Posterior vena cava (tissue), 2 donors: ENCODE measurements at regions of chr13 and their contacts with region 1.

Region 1: GRCh38 chr13:24678151-24678550 is 2.1 kb upstream of the ATP12A start:
- DNase-seq: no peak

Region 2: GRCh38 chr13:24520733-24521132 is 157.4 kb before region 1 on chr13:
- intact Hi-C with region 1: no loop called
- DNase-seq: no peak

Region 3: DNA sequence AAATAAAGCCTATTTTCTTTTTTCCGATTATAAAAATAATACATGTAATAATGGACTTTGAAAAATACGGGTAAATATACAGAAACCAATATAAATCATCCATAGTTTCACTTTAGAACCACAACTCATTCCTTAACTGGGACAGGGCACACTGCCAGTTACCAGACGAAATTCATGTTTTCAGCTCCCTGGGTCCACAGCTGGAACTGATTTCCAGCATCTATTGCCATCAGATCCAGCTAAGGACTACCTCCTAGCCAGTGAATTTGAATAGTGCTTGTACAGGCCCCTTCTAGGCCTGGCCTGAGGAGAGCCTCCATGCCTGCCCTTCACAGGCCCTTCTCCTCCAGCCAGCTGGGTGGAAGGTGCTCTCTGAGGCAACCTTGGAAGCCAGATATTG is 28.0 kb before region 1 on chr13:
- intact Hi-C with region 1: loop called in 1 of 2 experiments (anchors 1 kb)
- DNase-seq: no peak

Region 4: DNA sequence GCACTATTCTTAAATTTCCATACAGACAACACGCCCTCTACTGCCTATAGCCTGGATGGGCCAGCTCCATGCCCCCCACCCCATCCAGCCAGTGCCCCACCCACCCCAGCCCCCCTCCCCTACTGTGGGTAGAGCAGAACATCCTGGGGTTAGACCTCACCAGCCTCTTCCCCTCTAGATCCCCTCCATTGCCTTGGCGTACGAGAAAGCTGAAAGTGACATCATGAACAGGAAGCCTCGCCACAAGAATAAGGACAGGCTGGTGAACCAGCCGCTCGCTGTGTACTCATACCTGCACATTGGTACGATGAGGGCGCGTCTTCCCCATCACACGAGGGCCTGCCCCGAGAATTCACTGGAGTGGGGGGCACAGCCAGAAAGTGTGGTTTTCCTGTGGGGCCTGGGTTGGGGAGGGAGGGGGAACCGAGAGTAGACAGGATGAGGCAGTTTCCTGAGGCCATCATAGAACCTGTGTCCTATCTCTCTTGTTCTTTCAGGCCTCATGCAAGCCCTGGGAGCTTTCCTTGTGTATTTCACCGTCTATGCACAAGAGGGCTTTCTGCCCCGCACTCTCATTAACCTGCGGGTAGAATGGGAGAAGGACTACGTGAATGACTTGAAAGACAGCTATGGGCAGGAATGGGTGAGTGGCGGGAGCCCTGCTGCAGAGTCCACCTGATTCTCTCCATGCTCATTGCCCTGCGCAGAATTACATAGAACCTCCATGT is 31.2 kb after region 1 on chr13:
- intact Hi-C with region 1: no loop called
- DNase-seq: peak; percentile 61

Region 5: GRCh38 chr13:26112843-26113242 is 1434.7 kb after region 1 on chr13:
- intact Hi-C with region 1: no loop called
- DNase-seq: no peak